ENCODE measurements at regions of chr7 and their contacts with region 1.

Region 1: DNA sequence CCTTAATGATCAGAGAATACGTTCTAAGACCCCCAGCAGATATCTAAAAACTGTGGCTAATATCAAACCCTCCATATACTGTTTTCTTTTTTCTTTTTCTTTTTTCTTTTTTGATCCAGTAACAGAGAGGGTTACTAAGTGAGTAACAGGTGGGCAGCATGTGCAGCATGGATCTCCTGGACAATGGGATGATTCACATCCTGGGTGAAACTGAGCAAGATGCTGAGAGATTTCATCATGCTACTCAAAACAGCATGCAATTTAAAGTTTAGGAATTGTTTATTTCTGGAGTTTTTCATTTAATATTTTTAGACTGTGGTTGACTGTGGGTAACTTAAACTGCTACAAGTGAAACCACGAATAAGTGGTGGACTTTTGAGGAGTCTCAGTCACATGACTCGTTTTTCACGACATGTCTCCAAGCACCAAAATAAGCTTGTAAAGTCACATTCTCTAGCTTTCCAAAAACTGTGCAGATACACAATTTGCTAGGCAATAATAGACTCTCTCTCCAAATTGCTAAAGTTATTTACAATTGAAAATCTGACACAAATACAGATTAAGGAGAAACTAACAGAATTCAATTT is 716.2 kb downstream of the NXPH1 start:
- DNase-seq: no peak
- H3K4me3 ChIP-seq: no peak overlapping the region
- H3K27ac ChIP-seq: no peak overlapping the region
- H3K4me1 ChIP-seq: no peaks in the 10 kb centered on the region
- H3K27me3 ChIP-seq: no peaks in the 10 kb centered on the region
- CTCF ChIP-seq: no peak

Region 2: DNA sequence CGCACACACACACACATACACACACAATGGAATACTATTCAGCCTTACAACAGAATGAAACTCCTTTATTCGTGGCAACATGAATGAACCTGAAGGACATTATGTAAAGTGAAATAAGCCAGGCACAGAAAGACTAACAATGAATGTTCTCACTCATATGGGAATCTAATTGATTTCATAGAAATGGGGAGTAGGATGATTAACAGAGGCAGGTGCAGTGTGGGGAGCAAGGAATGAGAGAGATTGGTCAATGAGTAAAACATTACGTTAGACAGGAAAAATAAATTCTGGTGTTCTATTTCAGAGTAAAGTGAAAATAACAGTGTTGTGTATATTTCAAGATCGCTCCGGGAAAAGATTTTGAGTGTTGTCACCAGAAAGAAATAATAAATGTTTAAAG is 21.7 kb before region 1 on chr7:
- CTCF ChIA-PET with region 1: no interaction called
- POLR2A ChIA-PET with region 1: no interaction called
- intact Hi-C with region 1: loop called (anchors 1 kb)
- DNase-seq: no peak
- H3K4me3 ChIP-seq: no peak overlapping the region
- H3K27ac ChIP-seq: no peak overlapping the region
- H3K4me1 ChIP-seq: no peaks in the 10 kb centered on the region
- H3K27me3 ChIP-seq: no peaks in the 10 kb centered on the region
- CTCF ChIP-seq: no peak

Measured in A673 (cell line).